Mucosa of descending colon (tissue), 3 donors: ENCODE measurements at regions of chr15 and their contacts with region 1.

Region 1: GRCh38 chr15:32029862-32030781 is at the start of gene CHRNA7:
- DNase-seq: peak; percentile 64 to 80 (median 75)
- ATAC-seq: peak; percentile 88
- H3K4me3 ChIP-seq: no peak within 1 kb of the TSS
- H3K4me1 ChIP-seq: peaks cover 11% of the 10 kb centered on the region
- CTCF ChIP-seq: peak; percentile 27
- total RNA-seq, gene CHRNA7: 3.4 to 12.2 (median 5.3) TPM

Region 2: DNA sequence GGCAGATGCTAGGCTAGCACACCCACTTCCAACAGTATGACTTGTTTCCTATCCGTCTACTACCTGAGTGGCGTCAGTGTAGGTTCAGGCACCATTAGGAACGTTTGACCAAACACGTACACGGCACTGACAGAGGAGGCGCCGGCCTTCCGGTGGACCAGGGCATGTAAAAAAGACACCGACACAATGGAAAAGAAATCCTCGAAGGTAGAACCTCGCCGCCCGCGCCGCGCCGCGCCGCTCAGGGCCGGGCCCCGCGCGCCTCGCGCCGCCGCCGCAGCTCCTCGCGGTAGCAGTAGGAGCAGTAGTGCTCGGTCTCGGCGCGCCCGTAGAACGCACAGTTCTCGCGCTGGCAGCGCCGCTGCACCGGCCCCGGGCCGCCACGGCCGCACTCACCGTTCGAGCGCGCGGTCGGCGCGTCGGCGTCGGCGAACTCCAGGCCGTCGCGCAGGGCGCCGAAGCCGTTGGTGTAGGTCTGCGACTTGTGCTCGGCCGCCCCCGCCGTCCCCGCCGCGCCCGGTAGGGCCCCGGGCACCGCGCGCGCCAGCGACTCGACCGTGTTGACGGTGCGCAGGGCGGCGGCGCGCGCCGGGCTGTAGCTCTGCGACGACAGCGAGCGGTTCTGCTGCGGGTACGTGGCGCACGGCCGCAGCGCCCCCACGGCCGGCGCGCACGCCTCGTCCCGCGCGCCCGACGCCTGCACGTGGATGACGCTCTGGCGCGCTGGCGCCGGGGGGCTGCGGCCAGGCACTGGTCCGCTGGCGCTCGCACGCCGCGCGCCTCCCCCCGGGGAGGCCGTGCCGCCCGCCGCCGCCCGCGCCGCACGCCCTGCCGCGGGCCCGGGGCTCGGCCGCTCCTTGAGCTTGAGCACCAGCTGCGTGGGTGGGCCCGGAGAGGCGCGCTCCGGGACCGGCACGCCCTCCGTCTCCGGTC is 546.8 kb before region 1 on chr15:
- intact Hi-C with region 1: no loop called
- DNase-seq: peak in 2 of 3 donors; percentile 53 to 68
- ATAC-seq: peak; percentile 56
- H3K4me3 ChIP-seq: peak overlapping the region; percentile 9
- H3K4me1 ChIP-seq: peaks cover 8% of the 10 kb centered on the region
- CTCF ChIP-seq: no peak

Region 3: GRCh38 chr15:31977812-31978661 is 52.1 kb before region 1 on chr15:
- intact Hi-C with region 1: loop called in 1 of 2 experiments (anchors 5 kb)
- DNase-seq: peak; percentile 55 to 80 (median 79)
- ATAC-seq: peak; percentile 73
- H3K4me3 ChIP-seq: no peak overlapping the region
- H3K4me1 ChIP-seq: peaks cover 6% of the 10 kb centered on the region
- CTCF ChIP-seq: peak; percentile 71

Region 4: DNA sequence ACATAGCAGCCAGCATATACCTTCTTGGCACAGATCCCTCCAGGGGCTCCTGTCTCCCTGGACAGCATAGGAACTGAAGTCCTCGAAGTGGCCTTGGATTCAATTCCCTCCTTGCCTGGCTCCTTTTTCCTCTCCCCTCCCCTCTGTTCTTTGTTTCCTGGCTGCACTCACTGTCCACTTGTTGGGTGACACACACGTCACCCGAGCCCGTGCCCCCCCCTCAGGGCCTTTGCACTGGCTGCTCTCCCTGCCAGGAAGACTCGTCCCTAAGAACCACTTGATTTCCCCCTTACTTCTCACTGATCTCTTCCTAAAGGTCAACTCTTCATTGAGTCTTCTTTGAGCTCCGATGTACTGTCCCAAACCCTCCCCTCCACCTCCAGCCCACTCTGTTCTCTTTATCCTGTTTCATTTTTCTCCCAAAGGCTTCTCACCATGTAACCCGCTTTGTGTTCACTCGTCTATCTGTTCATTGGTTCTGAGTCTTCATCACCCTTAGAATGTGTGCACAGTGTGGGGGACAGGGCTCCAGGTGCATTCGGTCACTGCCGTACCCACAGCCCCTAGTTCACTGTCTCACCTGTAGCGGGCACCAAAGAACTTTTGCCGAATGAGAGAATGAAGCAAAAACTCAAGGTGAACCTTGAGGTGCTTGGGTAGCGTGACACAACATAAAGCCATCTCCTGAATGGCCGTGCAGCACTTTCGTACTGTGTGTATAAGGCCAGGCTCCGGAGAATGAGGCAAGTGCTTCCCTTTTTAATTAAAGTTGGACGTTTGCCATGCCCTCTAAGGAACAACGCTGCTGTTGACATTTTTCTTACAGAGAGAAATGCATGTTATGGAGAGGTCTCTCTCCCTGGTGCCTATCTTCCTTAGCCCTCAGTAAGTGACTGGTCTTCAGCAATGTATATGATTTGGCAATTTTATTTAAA is 74.2 kb after region 1 on chr15:
- intact Hi-C with region 1: no loop called
- DNase-seq: no peak
- ATAC-seq: no peak
- H3K4me3 ChIP-seq: no peak overlapping the region
- H3K4me1 ChIP-seq: no peaks in the 10 kb centered on the region
- CTCF ChIP-seq: no peak